ENCODE measurements at regions of chr5 and their contacts with region 1.

Region 1: DNA sequence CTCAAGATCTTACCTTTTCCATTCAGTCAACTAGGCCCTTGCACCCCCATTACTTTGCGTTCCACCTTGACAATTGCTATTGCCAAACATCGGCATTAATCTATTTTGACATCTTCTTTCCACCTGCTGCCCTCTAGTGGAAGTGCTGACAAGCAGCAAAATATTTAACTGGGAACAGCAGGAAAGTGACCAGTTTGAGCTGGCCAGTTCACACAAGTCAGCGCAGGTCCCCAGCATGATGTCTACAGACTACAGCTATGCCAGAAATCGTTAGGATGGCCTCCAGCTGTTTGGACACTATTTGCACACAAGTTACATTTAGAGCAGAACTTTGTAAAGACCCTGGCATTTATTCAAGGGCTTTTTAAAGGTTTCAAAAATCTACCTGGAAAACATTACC is 160.1 kb downstream of the GHR start:
- DNase-seq: peak; percentile 77
- ATAC-seq: peak; percentile 70
- H3K4me3 ChIP-seq: no peak overlapping the region
- H3K27ac ChIP-seq: no peak overlapping the region
- H3K4me1 ChIP-seq: no peaks in the 10 kb centered on the region; the same call in 1 of the 2 replicates
- H3K27me3 ChIP-seq: no peaks in the 10 kb centered on the region
- CTCF ChIP-seq: peak; percentile 97

Region 2: GRCh38 chr5:41856644-41857491 is 726.5 kb before region 1 on chr5:
- CTCF ChIA-PET with region 1: no interaction called
- POLR2A ChIA-PET with region 1: no interaction called
- intact Hi-C with region 1: loop called (anchors 2 kb)
- DNase-seq: peak; percentile 93
- ATAC-seq: peak; percentile 94
- H3K4me3 ChIP-seq: no peak overlapping the region
- H3K27ac ChIP-seq: no peak overlapping the region
- H3K4me1 ChIP-seq: no peaks in the 10 kb centered on the region
- H3K27me3 ChIP-seq: no peaks in the 10 kb centered on the region
- CTCF ChIP-seq: peak; percentile 95

Region 3: GRCh38 chr5:42360056-42360455 is 223.3 kb before region 1 on chr5:
- CTCF ChIA-PET with region 1: no interaction called
- POLR2A ChIA-PET with region 1: no interaction called
- intact Hi-C with region 1: loop called (anchors 5 kb)
- DNase-seq: peak; percentile 95
- ATAC-seq: peak; percentile 93
- H3K4me3 ChIP-seq: peak overlapping the region; percentile 4; the same call in 1 of the 2 replicates
- H3K27ac ChIP-seq: peak overlapping the region; percentile 86
- H3K4me1 ChIP-seq: peaks cover 26% of the 10 kb centered on the region
- H3K27me3 ChIP-seq: no peaks in the 10 kb centered on the region
- CTCF ChIP-seq: no peak

Region 4: GRCh38 chr5:42648036-42648435 is 64.7 kb after region 1 on chr5:
- CTCF ChIA-PET with region 1: interaction called, 11 read pairs
- POLR2A ChIA-PET with region 1: no interaction called
- intact Hi-C with region 1: no loop called
- DNase-seq: no peak
- ATAC-seq: no peak
- H3K4me3 ChIP-seq: no peak overlapping the region
- H3K27ac ChIP-seq: no peak overlapping the region
- H3K4me1 ChIP-seq: no peaks in the 10 kb centered on the region
- H3K27me3 ChIP-seq: no peaks in the 10 kb centered on the region
- CTCF ChIP-seq: no peak

Region 5: DNA sequence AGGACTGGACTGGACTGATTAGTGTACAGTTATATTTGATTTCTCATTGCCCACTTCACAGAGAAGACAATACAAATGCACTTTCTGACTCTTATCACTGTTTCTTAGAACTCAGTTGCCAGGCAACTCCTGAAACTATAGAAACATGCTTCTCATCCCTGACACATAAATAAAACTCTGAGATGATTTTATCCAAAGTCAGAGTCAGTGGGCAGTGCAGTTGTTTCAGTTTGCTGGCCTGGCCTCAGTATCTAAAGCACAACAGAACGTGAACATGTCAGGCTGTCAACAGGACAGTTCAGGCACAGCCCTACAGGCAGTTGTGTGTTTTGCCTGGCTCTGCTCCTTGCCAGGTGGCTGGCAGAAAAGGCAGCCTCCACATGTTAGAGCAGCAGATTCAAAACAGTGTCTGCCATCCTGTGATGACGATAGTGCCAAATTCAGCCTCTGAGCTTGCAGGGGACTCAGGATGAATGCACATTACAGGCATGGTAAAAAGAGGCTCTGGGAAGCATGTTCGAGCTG is 108.2 kb after region 1 on chr5:
- CTCF ChIA-PET with region 1: no interaction called
- POLR2A ChIA-PET with region 1: no interaction called
- intact Hi-C with region 1: no loop called
- DNase-seq: no peak
- ATAC-seq: no peak
- H3K4me3 ChIP-seq: no peak overlapping the region
- H3K27ac ChIP-seq: no peak overlapping the region
- H3K4me1 ChIP-seq: no peaks in the 10 kb centered on the region
- H3K27me3 ChIP-seq: no peaks in the 10 kb centered on the region
- CTCF ChIP-seq: no peak

Region 6: GRCh38 chr5:42767491-42768105 is 184.3 kb after region 1 on chr5:
- CTCF ChIA-PET with region 1: interaction called, 3 read pairs
- POLR2A ChIA-PET with region 1: no interaction called
- intact Hi-C with region 1: loop called (anchors 5 kb)
- DNase-seq: peak; percentile 74
- ATAC-seq: peak; percentile 57
- H3K4me3 ChIP-seq: no peak overlapping the region
- H3K27ac ChIP-seq: no peak overlapping the region
- H3K4me1 ChIP-seq: peaks cover 16% of the 10 kb centered on the region
- H3K27me3 ChIP-seq: no peaks in the 10 kb centered on the region
- CTCF ChIP-seq: peak; percentile 89